B cell (primary cell): ENCODE measurements at regions of chr6 and their contacts with region 1.

Region 1: DNA sequence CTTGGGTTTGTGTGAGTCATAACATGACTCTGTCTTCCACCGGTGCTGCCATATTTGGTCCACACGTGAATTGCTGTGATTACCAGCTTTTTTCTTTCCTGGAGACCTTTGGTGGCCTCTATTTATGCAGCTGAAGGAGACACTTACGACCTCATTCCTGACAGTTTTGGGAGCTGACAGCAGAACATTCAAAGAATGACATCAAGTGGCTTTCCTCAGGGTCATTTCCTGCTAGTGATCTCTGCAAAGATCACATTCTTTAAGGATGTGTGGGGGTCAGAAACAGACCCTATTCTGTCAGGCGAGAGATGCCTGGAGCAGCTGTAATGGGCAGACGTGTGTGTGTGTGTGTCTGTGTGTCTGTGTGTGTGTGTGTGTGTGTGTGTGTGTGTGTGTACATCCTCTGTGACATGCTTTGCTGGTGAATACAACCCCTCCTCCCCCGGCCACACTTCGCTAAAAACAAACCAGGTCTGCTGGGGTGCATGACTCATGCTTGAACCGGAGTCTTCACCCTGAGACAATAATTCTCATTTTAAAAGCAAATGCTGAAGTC is 115.6 kb downstream of the TMEM170B start:
- DNase-seq: no peak
- ATAC-seq: peak; percentile 49
- H3K4me3 ChIP-seq: no peak overlapping the region
- H3K4me3 Mint-ChIP-seq: no peak overlapping the region
- H3K27ac ChIP-seq: no peak overlapping the region
- H3K27ac Mint-ChIP-seq: no peak overlapping the region
- H3K4me1 ChIP-seq: peaks cover 0 to 5% of the 10 kb centered on the region in 2 donors
- H3K4me1 Mint-ChIP-seq: peaks cover 1% of the 10 kb centered on the region
- H3K27me3 ChIP-seq: peaks cover 0 to 9% (median 5%) of the 10 kb centered on the region in 4 experiments
- H3K27me3 Mint-ChIP-seq: peaks cover 14% of the 10 kb centered on the region
- CTCF ChIP-seq: no peak

Region 2: DNA sequence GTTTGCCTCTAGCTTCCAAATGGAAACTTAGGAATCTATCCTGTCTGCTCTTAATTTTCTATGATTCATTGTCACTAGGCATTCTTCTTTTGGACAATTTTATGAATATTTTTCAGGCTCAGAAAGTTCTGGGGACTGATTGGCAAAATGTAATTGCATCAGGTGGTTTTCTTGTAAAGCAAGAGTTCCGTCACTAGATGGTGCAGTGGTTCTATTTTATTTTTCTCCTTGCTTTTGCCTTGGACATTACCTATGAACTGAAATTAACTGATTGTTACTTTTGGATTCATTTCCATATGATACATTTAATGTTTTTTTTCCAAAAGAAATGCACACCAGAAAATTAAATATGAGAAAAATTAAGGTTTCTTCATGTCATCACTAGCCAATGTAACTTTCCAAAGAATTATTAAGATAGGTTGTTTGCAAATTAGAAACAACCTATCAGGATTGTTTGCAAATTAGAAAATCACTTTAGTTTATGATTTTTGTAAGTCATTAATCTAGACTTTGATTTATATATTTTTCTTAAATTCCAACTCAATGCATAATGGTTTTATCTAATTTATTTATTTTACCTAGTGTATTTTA is 67.6 kb before region 1 on chr6:
- CTCF ChIA-PET with region 1: interaction called, 3 read pairs
- POLR2A ChIA-PET with region 1: no interaction called
- intact Hi-C with region 1: loop called (anchors 5 kb)
- DNase-seq: peak; percentile 28
- ATAC-seq: no peak
- H3K4me3 ChIP-seq: no peak overlapping the region
- H3K4me3 Mint-ChIP-seq: no peak overlapping the region
- H3K27ac ChIP-seq: no peak overlapping the region
- H3K27ac Mint-ChIP-seq: no peak overlapping the region
- H3K4me1 ChIP-seq: no peaks in the 10 kb centered on the region
- H3K4me1 Mint-ChIP-seq: no peaks in the 10 kb centered on the region
- H3K27me3 ChIP-seq: no peaks in the 10 kb centered on the region
- H3K27me3 Mint-ChIP-seq: peaks cover 4% of the 10 kb centered on the region
- CTCF ChIP-seq: peak; percentile 44

Region 3: DNA sequence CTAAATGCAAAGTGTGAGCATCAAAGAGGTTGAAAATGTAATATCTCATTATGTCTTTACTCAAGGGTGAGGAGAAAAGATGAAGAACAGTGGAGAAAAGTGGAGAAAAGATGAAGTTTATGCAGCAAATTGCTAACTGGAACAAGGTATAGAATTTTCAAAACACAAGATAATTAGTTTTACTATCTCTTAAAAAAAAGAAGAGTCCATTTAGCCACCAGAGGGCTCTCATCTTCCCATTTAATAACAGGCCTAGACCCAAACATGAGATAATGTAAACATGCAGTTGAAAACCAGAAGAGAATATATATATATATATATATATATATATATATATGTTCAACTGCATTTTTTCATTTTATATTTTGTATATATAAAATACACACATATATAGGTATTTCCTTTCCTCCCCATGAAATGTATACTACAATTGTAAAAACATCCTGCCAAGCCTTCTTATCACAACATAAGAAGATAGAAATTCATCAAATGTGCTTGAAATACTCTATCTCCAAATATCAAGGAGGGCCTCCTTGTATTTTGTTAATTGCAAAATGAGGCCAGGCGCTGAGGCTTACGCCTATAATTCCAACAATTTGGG is 47.1 kb after region 1 on chr6:
- CTCF ChIA-PET with region 1: interaction called, 17 read pairs
- POLR2A ChIA-PET with region 1: no interaction called
- intact Hi-C with region 1: no loop called
- DNase-seq: peak; percentile 61
- ATAC-seq: no peak
- H3K4me3 ChIP-seq: no peak overlapping the region
- H3K4me3 Mint-ChIP-seq: no peak overlapping the region
- H3K27ac ChIP-seq: no peak overlapping the region
- H3K27ac Mint-ChIP-seq: no peak overlapping the region
- H3K4me1 ChIP-seq: no peaks in the 10 kb centered on the region
- H3K4me1 Mint-ChIP-seq: no peaks in the 10 kb centered on the region
- H3K27me3 ChIP-seq: peaks cover 0 to 4% (median 2%) of the 10 kb centered on the region in 4 experiments
- H3K27me3 Mint-ChIP-seq: no peaks in the 10 kb centered on the region
- CTCF ChIP-seq: peak; percentile 69

Region 4: GRCh38 chr6:12075067-12075563 is 422.0 kb after region 1 on chr6:
- CTCF ChIA-PET with region 1: interaction called, 10 read pairs
- POLR2A ChIA-PET with region 1: no interaction called
- intact Hi-C with region 1: loop called (anchors 2 kb)
- DNase-seq: peak; percentile 43
- ATAC-seq: no peak
- H3K4me3 ChIP-seq: no peak overlapping the region
- H3K4me3 Mint-ChIP-seq: no peak overlapping the region
- H3K27ac ChIP-seq: no peak overlapping the region
- H3K27ac Mint-ChIP-seq: no peak overlapping the region
- H3K4me1 ChIP-seq: peaks cover 0 to 6% of the 10 kb centered on the region in 2 donors
- H3K4me1 Mint-ChIP-seq: peaks cover 25% of the 10 kb centered on the region
- H3K27me3 ChIP-seq: no peaks in the 10 kb centered on the region
- H3K27me3 Mint-ChIP-seq: no peaks in the 10 kb centered on the region
- CTCF ChIP-seq: peak; percentile 69

Region 5: DNA sequence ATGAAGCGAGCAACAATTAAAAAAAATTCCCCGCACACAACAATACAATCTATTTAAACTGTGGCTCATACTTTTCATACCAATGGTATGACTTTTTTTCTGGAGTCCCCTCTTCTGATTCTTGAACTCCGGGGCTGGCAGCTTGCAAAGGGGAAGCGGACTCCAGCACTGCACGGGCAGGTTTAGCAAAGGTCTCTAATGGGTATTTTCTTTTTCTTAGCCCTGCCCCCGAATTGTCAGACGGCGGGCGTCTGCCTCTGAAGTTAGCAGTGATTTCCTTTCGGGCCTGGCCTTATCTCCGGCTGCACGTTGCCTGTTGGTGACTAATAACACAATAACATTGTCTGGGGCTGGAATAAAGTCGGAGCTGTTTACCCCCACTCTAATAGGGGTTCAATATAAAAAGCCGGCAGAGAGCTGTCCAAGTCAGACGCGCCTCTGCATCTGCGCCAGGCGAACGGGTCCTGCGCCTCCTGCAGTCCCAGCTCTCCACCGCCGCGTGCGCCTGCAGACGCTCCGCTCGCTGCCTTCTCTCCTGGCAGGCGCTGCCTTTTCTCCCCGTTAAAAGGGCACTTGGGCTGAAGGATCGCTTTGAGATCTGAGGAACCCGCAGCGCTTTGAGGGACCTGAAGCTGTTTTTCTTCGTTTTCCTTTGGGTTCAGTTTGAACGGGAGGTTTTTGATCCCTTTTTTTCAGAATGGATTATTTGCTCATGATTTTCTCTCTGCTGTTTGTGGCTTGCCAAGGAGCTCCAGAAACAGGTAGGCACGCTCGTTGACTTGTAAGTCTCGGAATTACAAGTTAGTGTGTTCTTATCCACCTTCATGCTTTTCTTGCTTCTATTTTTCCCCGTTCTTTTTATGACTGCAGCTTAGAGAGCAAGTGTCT is 637.1 kb after region 1 on chr6 and contains the start of gene EDN1:
- CTCF ChIA-PET with region 1: interaction called, 42 read pairs
- POLR2A ChIA-PET with region 1: no interaction called
- intact Hi-C with region 1: loop called (anchors 1 kb)
- DNase-seq: peak; percentile 63
- ATAC-seq: peak; percentile 77
- H3K4me3 ChIP-seq: peak within 1 kb of the TSS; percentile 32 to 87 (median 55)
- H3K4me3 Mint-ChIP-seq: peak within 1 kb of the TSS; percentile 89
- H3K27ac ChIP-seq: no peak within 1 kb of the TSS
- H3K27ac Mint-ChIP-seq: no peak within 1 kb of the TSS
- H3K4me1 ChIP-seq: peaks cover 7 to 14% of the 10 kb centered on the region in 2 donors
- H3K4me1 Mint-ChIP-seq: peaks cover 17% of the 10 kb centered on the region
- H3K27me3 ChIP-seq: peaks cover 0 to 31% (median 18%) of the 10 kb centered on the region in 4 experiments
- H3K27me3 Mint-ChIP-seq: peaks cover 44% of the 10 kb centered on the region
- CTCF ChIP-seq: peak; percentile 10
- total RNA-seq, gene EDN1: 2.1 and 2.6 TPM in 2 replicates

Region 6: DNA sequence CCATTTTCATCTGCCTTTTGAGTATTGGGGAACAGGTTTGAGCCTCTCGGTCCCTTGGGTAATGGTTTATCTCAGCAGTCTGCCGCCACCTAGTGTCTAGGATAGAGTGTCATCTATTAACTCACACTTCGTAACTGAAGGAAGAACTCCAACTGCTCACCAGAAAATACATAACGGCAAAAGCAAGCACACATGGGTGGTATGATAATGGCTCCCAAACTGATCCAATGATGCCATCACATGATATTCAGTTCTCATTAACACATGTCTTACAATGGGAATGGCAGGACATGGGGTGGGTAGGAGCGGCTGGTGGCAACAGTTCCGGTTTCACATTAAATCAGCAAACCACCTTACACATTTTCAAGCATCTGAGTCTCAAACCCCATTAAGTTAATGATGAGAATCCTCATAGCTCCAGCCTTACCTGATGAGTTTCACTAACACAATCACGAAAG is 952.8 kb after region 1 on chr6:
- CTCF ChIA-PET with region 1: interaction called, 79 read pairs
- POLR2A ChIA-PET with region 1: no interaction called
- intact Hi-C with region 1: no loop called
- DNase-seq: peak; percentile 76
- ATAC-seq: peak; percentile 83
- H3K4me3 ChIP-seq: peak overlapping the region in 3 of 5 experiments; percentile 32 to 50 (median 45)
- H3K4me3 Mint-ChIP-seq: peak overlapping the region; percentile 69
- H3K27ac ChIP-seq: no peak overlapping the region
- H3K27ac Mint-ChIP-seq: peak overlapping the region; percentile 33
- H3K4me1 ChIP-seq: peaks cover 12 to 20% of the 10 kb centered on the region in 2 donors
- H3K4me1 Mint-ChIP-seq: peaks cover 35% of the 10 kb centered on the region
- H3K27me3 ChIP-seq: peaks cover 0 to under 1% (median 0%) of the 10 kb centered on the region in 4 experiments
- H3K27me3 Mint-ChIP-seq: no peaks in the 10 kb centered on the region
- CTCF ChIP-seq: peak; percentile 80